ENCODE measurements at regions of chr5 and their contacts with region 1.

Region 1: DNA sequence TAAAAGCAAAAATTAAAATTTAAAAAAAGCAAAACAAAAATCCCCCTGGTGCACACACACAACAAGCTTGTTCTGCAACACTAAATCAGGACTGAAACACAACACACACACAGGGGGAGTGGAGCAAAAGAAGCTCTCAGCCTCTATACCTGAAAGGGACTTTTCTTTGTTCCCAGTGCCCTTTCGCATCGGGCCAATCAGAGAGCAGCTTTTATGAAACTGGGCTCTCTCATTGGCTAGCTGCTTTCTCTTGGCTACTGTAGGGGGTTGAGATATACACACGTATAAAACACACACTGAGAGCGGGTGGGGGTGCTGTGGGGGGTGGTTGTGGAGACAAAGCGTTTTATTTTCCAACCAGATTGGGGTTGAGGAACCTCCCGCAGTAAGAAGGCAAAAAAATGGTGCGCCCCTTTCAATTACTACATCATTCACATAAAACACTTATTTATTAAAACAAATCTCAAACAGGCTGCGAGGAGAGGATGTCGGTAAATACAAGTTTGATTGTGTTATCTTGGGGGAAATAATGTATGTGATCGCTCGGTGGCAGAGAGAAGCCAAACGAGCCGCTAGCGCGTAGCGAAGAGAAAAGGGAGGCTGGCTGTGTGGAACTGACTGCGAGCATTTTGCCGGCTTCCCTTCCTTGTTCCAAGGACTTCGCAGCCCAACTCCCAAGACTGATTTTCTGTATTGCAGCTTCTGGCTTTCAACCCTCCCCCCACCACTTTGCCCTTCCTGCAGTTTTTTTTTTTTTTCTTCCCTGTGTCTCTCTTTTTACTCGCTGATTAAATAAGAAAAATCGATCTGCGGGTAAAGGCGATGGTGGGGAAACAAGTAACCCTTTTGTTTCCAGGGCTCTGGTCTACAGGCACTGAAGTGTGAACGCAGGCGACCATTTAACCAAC is 2.5 kb upstream of the ZNF608 start:
- DNase-seq: peak; percentile 88
- ATAC-seq: peak; percentile 86
- H3K4me3 ChIP-seq: peak overlapping the region; percentile 89
- H3K27ac ChIP-seq: peak overlapping the region; percentile 58
- H3K4me1 ChIP-seq: peaks cover 26% of the 10 kb centered on the region
- H3K27me3 ChIP-seq: no peaks in the 10 kb centered on the region
- CTCF ChIP-seq: no peak

Region 2: GRCh38 chr5:124410539-124411488 is 338.1 kb before region 1 on chr5:
- CTCF ChIA-PET with region 1: interaction called, 3 read pairs
- POLR2A ChIA-PET with region 1: no interaction called
- intact Hi-C with region 1: loop called (anchors 2 kb)
- DNase-seq: no peak
- ATAC-seq: peak; percentile 24; the same call in 1 of the 2 replicates
- H3K4me3 ChIP-seq: no peak overlapping the region
- H3K27ac ChIP-seq: no peak overlapping the region
- H3K4me1 ChIP-seq: no peaks in the 10 kb centered on the region
- H3K27me3 ChIP-seq: no peaks in the 10 kb centered on the region
- CTCF ChIP-seq: no peak

Region 3: GRCh38 chr5:124570285-124571035 is 178.5 kb before region 1 on chr5:
- CTCF ChIA-PET with region 1: no interaction called
- POLR2A ChIA-PET with region 1: no interaction called
- intact Hi-C with region 1: no loop called
- DNase-seq: no peak
- ATAC-seq: no peak
- H3K4me3 ChIP-seq: no peak overlapping the region
- H3K27ac ChIP-seq: no peak overlapping the region
- H3K4me1 ChIP-seq: no peaks in the 10 kb centered on the region
- H3K27me3 ChIP-seq: no peaks in the 10 kb centered on the region
- CTCF ChIP-seq: no peak

Region 4: DNA sequence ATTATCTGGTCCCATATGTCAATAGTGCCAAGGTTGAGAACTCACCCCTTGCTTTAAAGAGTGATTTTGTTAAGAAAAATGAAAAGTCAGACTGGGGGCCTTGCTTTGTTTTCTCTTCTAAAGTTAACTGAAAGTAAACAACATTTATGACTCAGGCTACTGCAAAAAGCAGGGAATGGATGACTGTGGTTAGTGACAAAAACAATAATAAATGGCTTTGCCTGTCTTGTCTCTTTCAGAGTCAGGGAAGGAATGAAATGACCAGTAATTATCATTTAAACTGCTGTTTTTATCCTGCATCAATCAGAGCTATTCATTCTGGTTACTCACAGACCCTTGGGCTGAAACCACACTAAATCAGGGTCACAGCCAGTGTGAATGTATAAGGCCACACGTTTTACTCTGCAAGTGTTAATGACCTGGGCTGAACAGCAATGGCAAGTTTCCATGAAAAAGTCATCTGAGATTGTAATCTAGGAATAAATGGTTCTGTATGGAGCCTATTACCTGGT is 114.7 kb before region 1 on chr5:
- CTCF ChIA-PET with region 1: no interaction called
- POLR2A ChIA-PET with region 1: interaction called, 4 read pairs
- intact Hi-C with region 1: loop called (anchors 2 kb)
- DNase-seq: peak; percentile 71
- ATAC-seq: peak; percentile 67
- H3K4me3 ChIP-seq: 0 out of 2 replicates have a peak overlapping the region, but pooled peaks have one; percentile 11
- H3K27ac ChIP-seq: peak overlapping the region; percentile 96
- H3K4me1 ChIP-seq: peaks cover 34% of the 10 kb centered on the region
- H3K27me3 ChIP-seq: no peaks in the 10 kb centered on the region
- CTCF ChIP-seq: no peak

Region 5: GRCh38 chr5:124735169-124735858 is 13.6 kb before region 1 on chr5:
- CTCF ChIA-PET with region 1: no interaction called
- POLR2A ChIA-PET with region 1: no interaction called
- intact Hi-C with region 1: no loop called
- DNase-seq: no peak
- ATAC-seq: no peak
- H3K4me3 ChIP-seq: no peak overlapping the region
- H3K27ac ChIP-seq: no peak overlapping the region
- H3K4me1 ChIP-seq: peaks cover 1% of the 10 kb centered on the region; the same call in 1 of the 2 replicates
- H3K27me3 ChIP-seq: no peaks in the 10 kb centered on the region
- CTCF ChIP-seq: no peak

Region 6: DNA sequence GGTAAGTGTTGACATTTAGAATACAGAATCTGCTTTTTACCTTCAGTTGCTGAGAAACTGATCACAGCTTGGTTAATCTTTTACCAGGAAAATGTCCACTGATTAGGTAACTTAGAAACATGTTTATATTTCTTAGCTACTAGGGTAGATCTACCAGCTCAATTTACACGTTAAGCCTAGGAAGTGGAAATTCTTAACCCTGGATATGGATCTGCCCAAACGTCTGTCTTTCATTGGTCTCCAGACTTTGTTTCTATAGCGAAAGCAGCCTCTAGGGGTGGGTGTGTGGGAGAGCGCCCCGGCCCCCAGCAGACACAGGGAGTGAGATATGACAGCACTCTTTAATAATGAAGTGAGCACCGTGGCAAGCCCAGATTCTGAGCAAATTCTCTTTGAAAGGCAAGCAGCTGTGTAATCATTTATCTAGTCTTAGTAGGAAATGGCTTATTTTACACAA is 139.1 kb after region 1 on chr5:
- CTCF ChIA-PET with region 1: no interaction called
- POLR2A ChIA-PET with region 1: interaction called, 12 read pairs
- intact Hi-C with region 1: loop called (anchors 5 kb)
- DNase-seq: no peak
- ATAC-seq: no peak
- H3K4me3 ChIP-seq: no peak overlapping the region
- H3K27ac ChIP-seq: no peak overlapping the region
- H3K4me1 ChIP-seq: peaks cover 3% of the 10 kb centered on the region; the same call in 1 of the 2 replicates
- H3K27me3 ChIP-seq: no peaks in the 10 kb centered on the region
- CTCF ChIP-seq: no peak

Region 7: DNA sequence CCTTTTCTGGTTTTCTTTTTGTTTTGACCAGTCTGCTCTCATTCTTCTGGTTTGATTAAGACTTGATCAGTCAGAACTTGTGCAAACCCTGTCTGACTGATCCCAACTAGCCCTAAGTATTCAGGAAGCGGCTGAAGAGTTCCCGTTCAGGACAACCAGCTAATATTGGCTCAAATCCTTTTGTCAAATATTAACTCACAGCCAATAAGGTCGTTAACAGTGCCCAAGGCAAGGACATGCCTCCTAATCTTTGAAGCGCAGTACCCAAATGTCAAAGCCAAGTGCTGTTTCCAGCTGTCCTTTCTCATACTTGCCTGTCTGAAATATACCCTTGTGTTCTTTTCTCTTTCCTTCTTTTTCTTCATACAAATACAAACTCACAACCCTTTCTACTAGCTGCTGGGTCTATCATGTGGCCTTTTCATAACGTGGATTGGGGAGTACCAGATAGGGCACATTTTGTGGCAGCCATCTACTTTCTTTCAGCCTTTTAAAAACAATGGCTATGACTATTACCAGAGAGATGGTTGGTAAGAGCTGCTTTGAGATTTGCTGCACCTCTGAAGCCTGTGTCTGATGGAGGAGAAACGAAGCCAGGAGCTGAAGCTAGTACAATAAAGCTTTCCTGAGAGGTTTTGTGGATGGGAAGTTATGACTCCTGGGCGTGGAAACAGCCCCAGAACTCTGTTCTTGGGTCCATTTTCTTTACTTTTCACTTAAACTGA is 263.9 kb after region 1 on chr5:
- CTCF ChIA-PET with region 1: no interaction called
- POLR2A ChIA-PET with region 1: interaction called, 11 read pairs
- intact Hi-C with region 1: no loop called
- DNase-seq: no peak
- ATAC-seq: no peak
- H3K4me3 ChIP-seq: no peak overlapping the region
- H3K27ac ChIP-seq: no peak overlapping the region
- H3K4me1 ChIP-seq: peaks cover 20% of the 10 kb centered on the region
- H3K27me3 ChIP-seq: no peaks in the 10 kb centered on the region
- CTCF ChIP-seq: no peak

Region 8: DNA sequence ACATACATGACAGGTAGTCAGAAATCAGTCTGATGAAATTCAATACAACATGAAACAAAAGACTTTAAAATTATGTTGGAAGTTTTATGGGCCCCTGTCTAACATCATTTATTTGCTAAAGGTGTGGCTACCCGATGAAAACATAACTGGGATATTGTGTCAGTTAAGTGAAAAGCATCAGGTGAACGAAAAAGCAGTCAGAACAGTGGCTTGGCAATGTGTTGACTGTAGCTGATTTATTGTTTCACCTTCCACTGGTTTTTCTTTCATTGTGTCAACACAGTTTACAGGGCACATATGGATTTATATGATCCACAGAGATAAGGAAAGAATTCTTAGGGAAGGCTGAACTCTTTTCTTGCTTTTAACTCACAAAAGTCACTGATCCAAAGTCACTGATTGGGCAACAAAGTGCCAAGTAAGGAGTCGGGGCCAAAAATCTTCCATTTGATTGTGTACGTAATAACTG is 427.1 kb after region 1 on chr5:
- CTCF ChIA-PET with region 1: no interaction called
- POLR2A ChIA-PET with region 1: no interaction called
- intact Hi-C with region 1: loop called (anchors 5 kb)
- DNase-seq: peak; percentile 87
- ATAC-seq: peak; percentile 94
- H3K4me3 ChIP-seq: no peak overlapping the region
- H3K27ac ChIP-seq: peak overlapping the region; percentile 79
- H3K4me1 ChIP-seq: peaks cover 21% of the 10 kb centered on the region
- H3K27me3 ChIP-seq: no peaks in the 10 kb centered on the region
- CTCF ChIP-seq: no peak

Region 9: DNA sequence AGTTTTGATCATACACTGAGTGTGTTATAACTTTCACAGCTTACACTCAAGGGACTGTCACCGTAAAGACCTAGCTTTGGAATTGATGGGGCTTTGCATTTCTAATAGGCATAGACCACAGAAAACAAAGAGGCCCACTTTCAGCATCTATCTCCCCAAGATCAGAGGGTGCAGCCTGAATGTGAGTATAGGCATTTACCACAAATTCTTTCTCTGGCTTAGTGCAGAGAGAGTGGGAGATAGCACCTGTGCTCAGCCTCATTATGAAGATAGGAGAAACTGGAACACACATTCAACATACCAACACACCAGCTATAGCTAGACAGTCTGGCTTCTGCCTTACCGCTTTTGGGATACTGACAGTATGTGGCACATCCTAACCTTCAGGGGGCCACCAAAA is 890.9 kb after region 1 on chr5:
- CTCF ChIA-PET with region 1: no interaction called
- POLR2A ChIA-PET with region 1: interaction called, 15 read pairs
- intact Hi-C with region 1: no loop called
- DNase-seq: no peak
- ATAC-seq: no peak
- H3K4me3 ChIP-seq: no peak overlapping the region
- H3K27ac ChIP-seq: no peak overlapping the region
- H3K4me1 ChIP-seq: no peaks in the 10 kb centered on the region
- H3K27me3 ChIP-seq: no peaks in the 10 kb centered on the region
- CTCF ChIP-seq: no peak

Measured in PC-3 (cell line).